Spleen (tissue), 13 donors: ENCODE measurements at regions of chr19 and their contacts with region 1.

Region 1: GRCh38 chr19:15264061-15264932 is 32.0 kb upstream of the EPHX3 start:
- DNase-seq: peak; percentile 89
- H3K4me3 ChIP-seq: no peak overlapping the region
- H3K27ac ChIP-seq: peak overlapping the region in 6 of 8 donors; percentile 45 to 68 (median 60)
- H3K4me1 ChIP-seq: peaks cover 18 to 73% (median 42%) of the 10 kb centered on the region in 6 donors
- H3K27me3 ChIP-seq: no peaks in the 10 kb centered on the region
- CTCF ChIP-seq: peak; percentile 60 to 88 (median 83)
- POLR2A ChIP-seq: no peak

Region 2: DNA sequence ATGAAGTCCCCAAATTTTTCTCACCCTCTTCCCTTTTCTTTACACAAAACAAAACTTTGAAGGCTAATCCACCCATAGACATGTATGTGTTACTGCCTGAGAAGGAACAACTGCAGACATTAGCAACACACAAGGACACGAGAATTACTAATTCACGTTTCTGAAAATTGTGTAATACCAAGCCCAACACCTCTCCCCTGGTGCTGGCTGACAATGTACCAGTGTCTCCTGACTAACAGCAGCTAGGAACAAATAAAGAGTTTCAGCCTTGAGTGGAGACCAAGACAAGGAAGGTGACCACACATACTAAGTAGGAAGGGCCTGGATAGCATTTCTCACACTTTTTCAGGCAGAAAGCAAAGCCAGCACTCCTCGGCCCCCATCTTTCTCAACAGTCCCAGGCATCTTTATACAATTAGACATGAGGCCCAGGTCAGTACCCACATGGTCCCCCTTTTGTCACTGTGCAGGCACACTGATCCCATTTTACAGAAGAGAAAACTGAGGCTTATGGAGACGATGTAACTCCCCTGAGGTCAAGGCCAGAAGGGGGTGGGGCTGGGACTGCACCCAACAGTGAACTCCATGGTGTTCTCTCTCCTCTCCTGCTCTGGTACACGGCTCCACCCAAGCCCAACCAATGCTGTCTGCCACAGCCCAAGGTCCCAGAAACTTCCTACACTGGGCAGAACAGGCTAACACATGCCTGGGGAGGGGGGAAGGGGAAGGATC is 59.4 kb after region 1 on chr19:
- intact Hi-C with region 1: loop called (anchors 10 kb)
- DNase-seq: peak; percentile 78
- H3K4me3 ChIP-seq: peak overlapping the region in 1 of 8 donors; percentile 12
- H3K27ac ChIP-seq: peak overlapping the region in 7 of 8 donors; percentile 44 to 69 (median 49)
- H3K4me1 ChIP-seq: peaks cover 88 to 100% (median 99%) of the 10 kb centered on the region in 6 donors
- H3K27me3 ChIP-seq: no peaks in the 10 kb centered on the region
- CTCF ChIP-seq: no peak
- POLR2A ChIP-seq: no peak

Region 3: DNA sequence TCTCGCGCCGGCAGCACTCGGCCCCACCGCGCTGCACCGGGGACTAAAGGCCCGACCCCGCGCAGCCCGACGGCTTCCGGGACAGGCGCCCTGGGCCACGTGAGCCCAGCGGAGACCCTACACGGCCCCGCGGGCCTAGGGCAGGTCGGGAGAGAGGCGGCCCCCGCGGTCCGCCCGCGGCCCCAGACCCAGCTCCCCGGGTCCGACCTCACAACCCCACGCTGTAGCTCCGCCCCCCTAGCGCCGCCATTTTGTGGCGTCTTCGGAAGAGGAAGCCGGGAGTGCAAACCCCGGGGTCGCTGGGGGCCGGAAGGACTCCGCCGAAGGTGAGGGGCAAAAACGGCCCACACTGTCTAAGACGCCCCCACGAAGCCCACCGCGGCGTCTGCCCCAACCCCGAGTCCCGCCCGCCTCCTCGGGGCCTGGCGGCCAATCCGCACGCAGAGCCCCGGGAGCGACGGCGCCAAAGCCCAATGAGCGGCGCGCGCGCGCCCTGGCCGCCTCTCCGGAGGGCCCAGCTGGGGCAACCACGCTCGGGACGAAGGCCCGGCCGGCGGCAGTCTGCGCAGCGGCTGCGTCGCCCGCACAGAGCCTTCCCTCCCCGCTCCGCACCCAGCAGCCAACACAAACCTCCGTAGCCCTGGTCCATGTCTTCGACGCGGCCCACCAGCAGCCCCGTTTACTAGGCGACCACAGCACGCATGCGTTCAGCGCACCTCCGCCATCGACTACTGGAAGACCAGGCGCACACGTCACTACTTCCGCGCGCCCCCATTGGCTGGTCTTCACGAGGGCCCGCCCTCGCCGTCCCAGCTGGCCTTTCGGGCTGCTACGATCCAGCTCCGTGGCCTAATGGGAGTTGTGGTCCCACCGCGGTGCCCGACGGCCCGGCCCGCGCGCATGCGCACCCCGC is 115.0 kb after region 1 on chr19 and contains the start of gene AKAP8:
- intact Hi-C with region 1: loop called (anchors 10 kb)
- DNase-seq: peak; percentile 99
- H3K4me3 ChIP-seq: peak within 1 kb of the TSS; percentile 87 to 100 (median 98)
- H3K27ac ChIP-seq: peak within 1 kb of the TSS; percentile 95 to 99 (median 97)
- H3K4me1 ChIP-seq: peaks cover 32 to 57% (median 49%) of the 10 kb centered on the region in 6 donors
- H3K27me3 ChIP-seq: no peaks in the 10 kb centered on the region
- CTCF ChIP-seq: peak in 1 of 11 experiments; percentile 19
- POLR2A ChIP-seq: peak in 2 of 3 donors; percentile 57 to 76
- total RNA-seq, gene AKAP8: 24.9 to 51.3 (median 48.9) TPM

Region 4: GRCh38 chr19:15555759-15556633 is 291.7 kb after region 1 on chr19:
- intact Hi-C with region 1: loop called (anchors 5 kb)
- DNase-seq: peak; percentile 97
- H3K4me3 ChIP-seq: peak overlapping the region; percentile 15 to 70 (median 34)
- H3K27ac ChIP-seq: peak overlapping the region; percentile 13 to 81 (median 61)
- H3K4me1 ChIP-seq: peaks cover 6 to 27% (median 21%) of the 10 kb centered on the region in 6 donors
- H3K27me3 ChIP-seq: peaks cover 0 to 58% (median 6%) of the 10 kb centered on the region in 7 donors
- CTCF ChIP-seq: peak; percentile 54 to 92 (median 79)
- POLR2A ChIP-seq: no peak